ENCODE measurements at regions of chr2 and their contacts with region 1.

Region 1: DNA sequence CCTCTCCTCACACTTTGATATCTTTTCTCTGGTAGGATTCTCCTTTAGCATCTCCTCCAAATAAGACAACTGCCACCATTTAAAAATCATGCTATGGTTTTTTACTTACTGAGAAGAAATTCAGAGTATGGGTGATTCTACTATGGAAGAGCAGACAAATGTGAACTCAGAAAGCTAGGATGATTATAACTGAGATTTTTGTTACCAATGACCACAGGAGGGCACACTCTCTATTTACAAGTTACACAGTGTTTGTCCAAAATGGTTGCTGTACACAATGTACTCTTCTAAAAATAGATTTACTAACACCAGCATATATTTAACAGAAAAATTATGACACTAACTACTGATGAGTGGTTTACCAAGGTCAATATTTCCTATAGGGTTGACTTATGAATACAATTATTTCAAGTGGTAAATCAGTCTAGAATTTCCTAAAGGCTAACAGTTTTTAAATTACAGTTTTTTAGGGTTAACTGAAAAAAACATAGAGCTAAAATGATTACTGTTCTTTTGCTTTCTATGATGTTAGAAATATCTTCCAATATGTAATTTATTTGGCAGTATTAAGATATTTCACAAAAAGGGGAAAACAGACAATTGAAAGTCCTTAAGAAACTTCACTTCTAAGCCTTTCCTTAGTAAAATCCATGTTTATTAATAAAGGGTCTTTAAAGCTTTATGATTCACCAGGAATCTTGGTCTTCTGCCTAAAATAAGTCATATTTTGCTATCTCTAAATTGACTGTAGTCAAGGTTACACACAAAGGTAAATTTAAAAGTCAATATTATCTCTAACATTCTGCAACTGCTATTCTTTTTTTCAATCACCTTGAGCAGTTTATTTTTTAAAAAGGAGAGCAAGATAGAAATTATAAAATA is 57.2 kb downstream of the MAP4K3 start:
- DNase-seq: no peak
- H3K4me3 ChIP-seq: peak overlapping the region in 8 of 59 donors; percentile 1 to 31 (median 14)
- H3K27ac ChIP-seq: peak overlapping the region in 56 of 59 donors; percentile 0 to 83 (median 62)
- H3K27me3 ChIP-seq: no peaks in the 10 kb centered on the region
- CTCF ChIP-seq: peak; percentile 55 to 88 (median 74)

Region 2: GRCh38 chr2:38975042-38975441 is 404.8 kb before region 1 on chr2:
- intact Hi-C with region 1: no loop called
- DNase-seq: no peak
- H3K4me3 ChIP-seq: no peak overlapping the region
- H3K27ac ChIP-seq: peak overlapping the region in 13 of 59 donors; percentile 2 to 64 (median 25)
- H3K27me3 ChIP-seq: no peaks in the 10 kb centered on the region
- CTCF ChIP-seq: no peak

Region 3: GRCh38 chr2:39436592-39437510 is 57.0 kb after region 1 on chr2 and contains the start of gene MAP4K3:
- intact Hi-C with region 1: loop called (anchors 1 to 5 kb)
- DNase-seq: peak; percentile 75 to 94 (median 88)
- H3K4me3 ChIP-seq: peak within 1 kb of the TSS; percentile 54 to 99 (median 92)
- H3K27ac ChIP-seq: peak within 1 kb of the TSS; percentile 79 to 99 (median 95)
- H3K27me3 ChIP-seq: no peaks in the 10 kb centered on the region
- CTCF ChIP-seq: peak in 14 of 56 donors; percentile 1 to 44 (median 16)
- total RNA-seq, gene MAP4K3: 50.1 to 100 (median 72.2) TPM

Region 4: GRCh38 chr2:39530411-39530866 is 150.6 kb after region 1 on chr2:
- intact Hi-C with region 1: no loop called
- DNase-seq: no peak
- H3K4me3 ChIP-seq: no peak overlapping the region
- H3K27ac ChIP-seq: no peak overlapping the region
- H3K27me3 ChIP-seq: no peaks in the 10 kb centered on the region
- CTCF ChIP-seq: peak in 15 of 56 donors; percentile 9 to 40 (median 19)

Measured in dorsolateral prefrontal cortex (tissue), 120 donors.